Heart left ventricle (tissue), 16 donors: ENCODE measurements at regions of chr17 and their contacts with region 1.

Region 1: GRCh38 chr17:59435238-59435637 is 103.8 kb downstream of the YPEL2 start:
- DNase-seq: no peak
- ATAC-seq: peak in 1 of 4 donors; percentile 15
- H3K4me3 ChIP-seq: no peak overlapping the region
- H3K27ac ChIP-seq: peak overlapping the region in 1 of 12 donors; percentile 17
- H3K4me1 ChIP-seq: peaks cover 0 to 72% (median 23%) of the 10 kb centered on the region in 12 donors
- H3K27me3 ChIP-seq: no peaks in the 10 kb centered on the region
- CTCF ChIP-seq: no peak
- POLR2A ChIP-seq: no peak

Region 2: GRCh38 chr17:59366773-59367657 is 68.2 kb before region 1 on chr17:
- intact Hi-C with region 1: loop called in 2 of 10 experiments (anchors 1 to 5 kb)
- DNase-seq: peak in 4 of 5 donors; percentile 55 to 70 (median 59)
- ATAC-seq: peak; percentile 69 to 84 (median 73)
- H3K4me3 ChIP-seq: peak overlapping the region in 4 of 12 donors; percentile 1 to 9 (median 6)
- H3K27ac ChIP-seq: peak overlapping the region; percentile 80 to 99 (median 94)
- H3K4me1 ChIP-seq: peaks cover 48 to 100% (median 99%) of the 10 kb centered on the region in 12 donors
- H3K27me3 ChIP-seq: no peaks in the 10 kb centered on the region
- CTCF ChIP-seq: no peak
- POLR2A ChIP-seq: no peak

Region 3: DNA sequence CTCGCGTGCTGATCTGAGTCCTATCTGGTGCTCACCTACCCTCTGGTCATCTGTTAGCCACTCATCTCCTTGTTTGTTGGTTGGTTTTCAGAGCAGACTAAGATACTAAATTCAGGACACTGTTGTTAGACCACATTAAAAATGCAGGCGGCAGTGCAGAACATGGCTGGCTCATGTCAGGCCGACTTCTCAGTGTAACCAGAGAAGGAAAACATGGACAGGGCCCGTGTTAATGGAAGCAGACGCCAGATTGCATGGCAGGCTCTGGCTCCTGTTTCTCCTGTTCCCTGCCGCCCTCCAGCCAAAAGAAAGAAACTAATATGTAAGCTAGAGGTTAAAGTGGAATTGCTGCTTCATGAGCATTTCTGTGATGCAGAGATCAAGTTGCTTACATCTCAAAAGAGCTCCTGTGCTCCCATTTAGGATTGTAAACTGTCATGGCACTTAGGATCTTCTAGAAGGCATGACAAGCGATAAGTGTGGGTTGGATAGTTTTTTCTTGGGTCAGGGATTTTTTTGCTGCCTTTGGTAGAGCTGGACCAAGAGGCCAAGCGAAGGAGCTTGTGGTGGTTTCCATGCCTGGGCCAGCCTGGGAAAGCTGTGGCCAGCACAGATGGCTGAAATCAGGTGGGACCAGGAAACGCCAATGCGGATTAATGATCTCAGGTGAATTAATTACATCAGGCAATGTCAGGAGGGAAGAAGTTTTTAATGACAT is 47.7 kb before region 1 on chr17:
- intact Hi-C with region 1: loop called in 1 of 10 experiments (anchors 5 kb)
- DNase-seq: no peak
- ATAC-seq: peak; percentile 42 to 52 (median 47)
- H3K4me3 ChIP-seq: no peak overlapping the region
- H3K27ac ChIP-seq: peak overlapping the region in 11 of 12 donors; percentile 30 to 80 (median 65)
- H3K4me1 ChIP-seq: peaks cover 0 to 72% (median 39%) of the 10 kb centered on the region in 12 donors
- H3K27me3 ChIP-seq: no peaks in the 10 kb centered on the region
- CTCF ChIP-seq: no peak
- POLR2A ChIP-seq: no peak